IMR-90 (cell line): ENCODE measurements at regions of chr1 and their contacts with region 1.

Region 1: GRCh38 chr1:119758584-119758983 is 10.1 kb downstream of the HMGCS2 start:
- DNase-seq: no peak
- ATAC-seq: no peak
- H3K4me3 ChIP-seq: no peak overlapping the region
- H3K27ac ChIP-seq: no peak overlapping the region
- H3K4me1 ChIP-seq: no peaks in the 10 kb centered on the region
- H3K27me3 ChIP-seq: peaks cover 6% of the 10 kb centered on the region
- CTCF ChIP-seq: no peak
- POLR2A ChIP-seq: no peak
- RAD21 ChIP-seq: no peak

Region 2: DNA sequence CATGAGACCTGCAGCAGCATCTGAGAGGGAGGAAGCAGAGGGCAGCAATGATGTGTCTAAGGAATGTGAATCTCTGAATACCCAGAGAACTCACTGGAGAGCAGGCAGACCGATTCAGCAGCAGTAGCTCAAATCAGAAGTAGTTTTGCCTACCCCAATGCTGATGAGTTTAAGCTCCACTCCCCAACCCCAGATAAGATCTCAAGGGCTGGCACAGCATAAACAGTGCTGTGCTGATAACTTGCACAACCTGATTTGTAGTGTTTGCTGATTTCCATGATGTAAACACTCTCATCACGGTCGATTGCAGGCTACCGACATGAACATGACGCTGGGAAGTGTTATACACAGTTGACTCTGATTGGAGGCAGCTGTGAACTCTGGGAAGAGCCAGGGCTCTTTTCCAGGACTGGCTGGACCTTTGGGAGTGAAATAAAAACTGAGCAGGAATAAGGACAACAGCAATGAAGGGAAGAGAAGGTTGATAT is 21.3 kb after region 1 on chr1:
- CTCF ChIA-PET with region 1: no interaction called
- POLR2A ChIA-PET with region 1: no interaction called
- dilution Hi-C with region 1: no loop called
- in situ Hi-C with region 1: no loop called
- intact Hi-C with region 1: loop called (anchors 2 kb)
- DNase-seq: peak; percentile 64
- ATAC-seq: peak; percentile 85
- H3K4me3 ChIP-seq: peak overlapping the region; percentile 6; the same call in 1 of the 2 replicates
- H3K27ac ChIP-seq: peak overlapping the region; percentile 62; the same call in 1 of the 2 replicates
- H3K4me1 ChIP-seq: peaks cover 9% of the 10 kb centered on the region
- H3K27me3 ChIP-seq: no peaks in the 10 kb centered on the region
- CTCF ChIP-seq: no peak
- POLR2A ChIP-seq: no peak
- RAD21 ChIP-seq: no peak

Region 3: DNA sequence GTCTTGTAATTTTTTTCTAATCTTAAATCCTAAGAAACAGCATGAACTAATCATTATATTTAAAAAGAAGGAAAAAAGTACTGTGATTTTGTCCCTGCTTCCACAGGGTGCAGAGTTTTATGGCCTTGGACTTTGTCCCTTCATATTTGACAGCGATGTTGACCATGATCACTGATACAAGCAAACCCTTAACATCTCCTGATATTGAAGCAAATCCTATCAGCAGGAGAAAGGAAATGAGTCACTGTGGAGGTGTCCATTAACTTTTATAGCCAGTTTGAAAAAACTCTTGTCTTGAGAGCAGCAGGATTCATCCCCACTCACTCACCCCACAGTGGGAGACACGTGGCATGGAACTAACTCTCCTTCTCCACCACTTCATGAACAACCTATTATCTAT is 57.8 kb after region 1 on chr1:
- CTCF ChIA-PET with region 1: no interaction called
- POLR2A ChIA-PET with region 1: no interaction called
- dilution Hi-C with region 1: no loop called
- in situ Hi-C with region 1: loop called (anchors 10 kb)
- intact Hi-C with region 1: no loop called
- DNase-seq: peak; percentile 58
- ATAC-seq: peak; percentile 35; the same call in 1 of the 2 replicates
- H3K4me3 ChIP-seq: no peak overlapping the region
- H3K27ac ChIP-seq: no peak overlapping the region
- H3K4me1 ChIP-seq: peaks cover 6% of the 10 kb centered on the region; the same call in 1 of the 2 replicates
- H3K27me3 ChIP-seq: no peaks in the 10 kb centered on the region
- CTCF ChIP-seq: no peak
- POLR2A ChIP-seq: no peak
- RAD21 ChIP-seq: no peak